ENCODE measurements at regions of chr1 and their contacts with region 1.

Region 1: DNA sequence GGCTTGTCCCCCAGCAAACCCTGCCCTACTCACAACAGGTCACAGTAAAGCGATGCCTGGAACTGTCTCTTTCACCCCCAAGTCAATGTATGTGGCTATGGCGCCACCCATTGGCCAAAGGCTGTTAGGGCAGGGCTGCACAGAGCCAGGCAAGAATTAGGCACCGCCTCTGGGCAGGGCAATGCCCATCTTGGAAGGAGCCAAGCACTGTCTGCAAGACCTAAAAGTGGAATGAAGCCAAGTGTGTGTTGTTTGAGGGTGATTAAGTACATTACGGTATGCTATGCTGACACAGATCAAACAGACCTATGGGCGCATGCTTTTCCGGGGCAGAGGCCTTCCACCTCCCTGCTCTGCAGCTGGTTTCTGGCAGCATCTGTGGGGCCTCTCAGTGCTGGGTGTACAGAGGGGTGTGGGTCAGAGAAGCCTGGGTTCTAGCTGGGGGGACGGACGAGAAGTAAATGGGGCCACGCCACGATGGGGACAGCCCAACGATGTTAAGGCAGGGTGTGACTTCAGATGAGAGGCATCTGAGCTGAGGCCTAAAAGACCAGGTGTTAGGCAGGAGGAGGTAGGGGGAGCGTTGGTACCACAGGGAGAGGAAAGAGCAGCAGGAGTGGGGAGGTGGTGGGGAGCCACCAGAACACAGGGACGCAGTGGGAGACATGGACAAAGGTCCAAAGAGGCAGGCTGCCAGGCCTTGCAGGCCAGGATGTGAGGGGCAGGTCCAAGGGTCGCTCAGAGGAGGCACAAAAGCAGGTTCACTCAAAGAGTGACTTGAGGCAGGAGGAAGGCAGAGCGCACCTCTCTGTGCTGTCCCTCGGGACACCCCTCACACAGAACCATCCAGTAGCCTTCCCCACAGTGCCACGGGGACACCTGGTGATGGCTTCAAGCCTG is 49.8 kb downstream of the ACOT7 start:
- DNase-seq: no peak
- H3K4me3 ChIP-seq: no peak overlapping the region
- H3K27ac ChIP-seq: peak overlapping the region in 1 of 4 donors; percentile 49
- H3K4me1 ChIP-seq: peaks cover 13 to 28% (median 14%) of the 10 kb centered on the region in 3 donors
- H3K27me3 ChIP-seq: no peaks in the 10 kb centered on the region
- CTCF ChIP-seq: peak; percentile 61 to 99 (median 96)
- POLR2A ChIP-seq: no peak

Region 2: GRCh38 chr1:6052543-6053205 is 291.1 kb before region 1 on chr1:
- intact Hi-C with region 1: loop called (anchors 10 kb)
- DNase-seq: no peak
- H3K4me3 ChIP-seq: no peak overlapping the region
- H3K27ac ChIP-seq: no peak overlapping the region
- H3K4me1 ChIP-seq: peaks cover 0 to 14% (median 0%) of the 10 kb centered on the region in 3 donors
- H3K27me3 ChIP-seq: peaks cover 0 to 6% (median 0%) of the 10 kb centered on the region in 4 donors
- CTCF ChIP-seq: peak; percentile 34 to 59 (median 40)
- POLR2A ChIP-seq: no peak

Region 3: GRCh38 chr1:6245086-6245868 is 98.5 kb before region 1 on chr1:
- intact Hi-C with region 1: loop called (anchors 2 kb)
- DNase-seq: no peak
- H3K4me3 ChIP-seq: peak overlapping the region in 2 of 4 donors; percentile 18 to 37
- H3K27ac ChIP-seq: no peak overlapping the region
- H3K4me1 ChIP-seq: peaks cover 29 to 62% (median 40%) of the 10 kb centered on the region in 3 donors
- H3K27me3 ChIP-seq: peaks cover 25 to 100% (median 52%) of the 10 kb centered on the region in 4 donors
- CTCF ChIP-seq: peak; percentile 67 to 95 (median 88)
- POLR2A ChIP-seq: no peak

Measured in esophagus squamous epithelium (tissue), 5 donors.